Activated B cell treated with CpG ODN at 0.5 μM for 24 hours (primary cell): ENCODE measurements at regions of chr19 and their contacts with region 1.

Region 1: DNA sequence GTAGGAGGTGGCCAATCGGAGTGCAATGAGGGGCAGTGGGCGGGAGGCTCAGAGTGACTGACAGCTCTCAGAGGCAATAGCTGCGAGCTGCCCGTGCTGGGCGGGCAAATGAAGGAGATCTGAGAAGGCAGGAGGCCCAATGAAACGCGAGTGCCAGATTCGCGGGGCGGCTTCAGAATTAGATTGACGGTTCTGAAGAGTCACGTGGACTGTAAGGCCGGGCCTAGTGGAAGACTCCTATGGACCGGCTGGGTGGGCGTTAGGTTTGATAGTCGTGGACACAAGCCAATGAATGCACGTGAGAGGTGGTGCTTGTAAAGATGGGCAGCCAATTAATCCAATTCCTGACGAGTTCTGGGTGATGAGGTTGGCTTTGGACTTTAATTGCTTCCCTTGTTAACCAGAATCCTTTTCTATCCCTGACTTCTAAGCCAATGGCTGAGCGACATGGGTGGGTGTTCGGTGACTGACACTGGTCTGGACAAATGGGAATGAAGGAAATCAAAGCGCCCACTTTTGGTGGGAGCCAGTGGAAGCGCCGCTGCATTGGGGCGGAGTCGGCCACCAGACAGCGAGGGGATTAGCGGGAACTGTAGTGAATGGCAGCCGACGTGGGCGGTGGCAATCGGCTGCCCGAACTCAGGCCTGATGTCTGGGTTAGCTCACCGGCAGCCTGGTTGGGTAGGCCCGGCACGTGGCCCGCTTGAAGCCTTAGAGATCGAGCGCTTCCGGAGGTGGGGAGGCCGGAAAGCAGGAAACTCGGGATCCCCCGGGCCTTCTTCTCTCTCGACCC is 524 bp upstream of the KHSRP start:
- DNase-seq: peak; percentile 92
- ATAC-seq: peak; percentile 83
- H3K4me3 Mint-ChIP-seq: peak overlapping the region; percentile 78
- H3K27ac Mint-ChIP-seq: peak overlapping the region; percentile 85
- H3K4me1 Mint-ChIP-seq: peaks cover 30% of the 10 kb centered on the region
- H3K27me3 Mint-ChIP-seq: no peaks in the 10 kb centered on the region
- CTCF ChIP-seq: no peak

Region 2: DNA sequence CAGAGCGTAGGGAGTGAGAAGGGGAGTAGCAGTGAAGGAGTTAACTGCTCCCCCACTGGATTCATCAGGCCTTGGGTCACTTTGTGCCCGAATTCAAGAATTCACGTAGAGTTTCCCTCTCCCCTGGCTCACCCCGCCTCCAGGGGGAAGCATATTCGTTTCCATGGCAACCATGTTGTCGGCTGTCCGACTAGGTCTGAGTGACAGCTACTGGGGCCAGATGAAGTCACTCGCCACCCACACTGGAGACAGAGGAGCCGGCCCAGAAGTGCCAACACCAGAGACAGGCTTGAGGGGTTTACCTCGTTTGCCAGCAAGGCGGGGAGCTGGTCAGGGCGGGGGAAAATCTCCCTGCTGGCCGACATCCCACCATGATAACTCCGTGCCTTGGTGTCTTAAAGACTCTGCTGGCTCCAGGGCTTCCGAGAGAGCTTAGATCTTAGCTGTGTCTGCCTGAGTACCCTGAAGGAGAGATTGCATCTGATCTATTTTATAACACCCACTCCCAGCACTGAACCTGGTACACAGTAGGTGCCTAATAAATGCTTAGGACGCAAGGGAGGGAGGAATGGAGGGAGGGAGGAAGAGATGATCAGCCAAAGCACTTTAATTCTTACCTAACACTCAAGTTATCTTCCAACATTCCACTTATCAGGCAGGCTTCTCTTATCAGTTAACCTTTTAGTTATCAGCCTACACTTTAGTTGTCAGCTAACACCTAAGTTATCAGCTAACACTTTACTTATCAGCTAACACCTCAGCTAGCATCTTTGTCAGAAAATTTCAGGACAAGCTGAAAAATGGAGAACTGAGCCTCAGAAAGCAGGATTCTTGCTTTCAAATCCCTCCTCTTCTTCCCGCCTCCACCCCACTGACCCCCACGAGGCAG is 1027.1 kb before region 1 on chr19:
- CTCF ChIA-PET with region 1: no interaction called
- POLR2A ChIA-PET with region 1: no interaction called
- intact Hi-C with region 1: no loop called
- DNase-seq: no peak
- ATAC-seq: no peak
- H3K4me3 Mint-ChIP-seq: no peak overlapping the region
- H3K27ac Mint-ChIP-seq: no peak overlapping the region
- H3K4me1 Mint-ChIP-seq: no peaks in the 10 kb centered on the region
- H3K27me3 Mint-ChIP-seq: peaks cover 51% of the 10 kb centered on the region
- CTCF ChIP-seq: no peak

Region 3: GRCh38 chr19:5719961-5720790 is 705.0 kb before region 1 on chr19 and contains the starts of genes CATSPERD and LONP1:
- CTCF ChIA-PET with region 1: no interaction called
- POLR2A ChIA-PET with region 1: no interaction called
- intact Hi-C with region 1: loop called (anchors 10 kb)
- DNase-seq: peak; percentile 94
- ATAC-seq: peak; percentile 87
- H3K4me3 Mint-ChIP-seq: peak within 1 kb of the TSS; percentile 89
- H3K27ac Mint-ChIP-seq: peak within 1 kb of the TSS; percentile 93
- H3K4me1 Mint-ChIP-seq: peaks cover 27% of the 10 kb centered on the region
- H3K27me3 Mint-ChIP-seq: peaks cover 4% of the 10 kb centered on the region
- CTCF ChIP-seq: no peak
- total RNA-seq, gene CATSPERD: not detected in 2 replicates
- total RNA-seq, gene LONP1: 72.9 and 77.5 TPM in 2 replicates

Region 4: GRCh38 chr19:6362027-6362350 is 63.1 kb before region 1 on chr19:
- CTCF ChIA-PET with region 1: no interaction called
- POLR2A ChIA-PET with region 1: interaction called, 8 read pairs
- intact Hi-C with region 1: loop called (anchors 1 kb)
- DNase-seq: no peak
- ATAC-seq: no peak
- H3K4me3 Mint-ChIP-seq: peak overlapping the region; percentile 87
- H3K27ac Mint-ChIP-seq: peak overlapping the region; percentile 78
- H3K4me1 Mint-ChIP-seq: peaks cover 11% of the 10 kb centered on the region
- H3K27me3 Mint-ChIP-seq: no peaks in the 10 kb centered on the region
- CTCF ChIP-seq: no peak

Region 5: GRCh38 chr19:6460101-6460853 is 35.1 kb after region 1 on chr19:
- CTCF ChIA-PET with region 1: no interaction called
- POLR2A ChIA-PET with region 1: interaction called, 13 read pairs
- intact Hi-C with region 1: loop called (anchors 1 kb)
- DNase-seq: peak; percentile 90
- ATAC-seq: peak; percentile 82
- H3K4me3 Mint-ChIP-seq: peak overlapping the region; percentile 90
- H3K27ac Mint-ChIP-seq: peak overlapping the region; percentile 79
- H3K4me1 Mint-ChIP-seq: peaks cover 42% of the 10 kb centered on the region
- H3K27me3 Mint-ChIP-seq: peaks cover 3% of the 10 kb centered on the region
- CTCF ChIP-seq: no peak

Region 6: DNA sequence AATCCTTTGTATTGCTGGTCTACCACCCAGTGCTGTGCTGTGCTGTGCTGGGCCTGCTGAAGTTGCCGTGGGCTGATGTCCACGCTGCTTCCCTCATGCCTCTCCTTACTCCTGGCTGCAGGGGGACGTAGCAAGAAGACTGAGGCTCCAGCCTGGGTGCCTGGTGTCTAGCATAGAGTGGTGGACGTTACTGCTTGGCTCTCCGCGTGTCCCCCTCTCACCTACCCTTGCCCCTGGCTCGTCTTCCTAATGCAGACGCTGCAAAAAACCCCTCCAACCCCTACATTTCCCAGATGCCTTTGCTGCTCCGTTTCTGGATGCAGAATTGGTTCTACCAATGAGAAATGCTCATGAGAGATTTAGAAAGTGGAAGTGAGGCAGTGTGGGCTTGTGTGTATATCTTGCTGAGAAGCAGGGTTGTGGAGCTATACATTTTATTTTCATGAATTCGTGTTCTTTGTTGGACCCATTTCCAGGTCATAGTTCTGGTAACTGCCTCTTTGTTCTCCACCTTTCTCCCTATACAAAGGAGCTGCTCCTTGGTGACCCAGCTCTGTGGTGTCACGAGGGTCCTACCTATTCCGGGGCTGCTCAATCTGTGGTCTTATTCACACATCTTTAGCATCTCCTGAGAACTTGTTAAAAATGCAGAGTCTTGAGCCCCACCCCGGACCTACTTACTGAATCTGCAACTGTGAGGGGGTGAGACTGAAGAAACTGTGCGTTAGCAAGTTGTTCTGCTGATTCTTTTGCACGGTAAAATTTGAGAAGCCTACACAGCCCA is 64.3 kb after region 1 on chr19:
- CTCF ChIA-PET with region 1: no interaction called
- POLR2A ChIA-PET with region 1: interaction called, 4 read pairs
- intact Hi-C with region 1: loop called (anchors 1 kb)
- DNase-seq: no peak
- ATAC-seq: peak; percentile 95
- H3K4me3 Mint-ChIP-seq: peak overlapping the region; percentile 84
- H3K27ac Mint-ChIP-seq: peak overlapping the region; percentile 85
- H3K4me1 Mint-ChIP-seq: peaks cover 13% of the 10 kb centered on the region
- H3K27me3 Mint-ChIP-seq: no peaks in the 10 kb centered on the region
- CTCF ChIP-seq: no peak